ENCODE measurements at regions of chr17 and their contacts with region 1.

Region 1: DNA sequence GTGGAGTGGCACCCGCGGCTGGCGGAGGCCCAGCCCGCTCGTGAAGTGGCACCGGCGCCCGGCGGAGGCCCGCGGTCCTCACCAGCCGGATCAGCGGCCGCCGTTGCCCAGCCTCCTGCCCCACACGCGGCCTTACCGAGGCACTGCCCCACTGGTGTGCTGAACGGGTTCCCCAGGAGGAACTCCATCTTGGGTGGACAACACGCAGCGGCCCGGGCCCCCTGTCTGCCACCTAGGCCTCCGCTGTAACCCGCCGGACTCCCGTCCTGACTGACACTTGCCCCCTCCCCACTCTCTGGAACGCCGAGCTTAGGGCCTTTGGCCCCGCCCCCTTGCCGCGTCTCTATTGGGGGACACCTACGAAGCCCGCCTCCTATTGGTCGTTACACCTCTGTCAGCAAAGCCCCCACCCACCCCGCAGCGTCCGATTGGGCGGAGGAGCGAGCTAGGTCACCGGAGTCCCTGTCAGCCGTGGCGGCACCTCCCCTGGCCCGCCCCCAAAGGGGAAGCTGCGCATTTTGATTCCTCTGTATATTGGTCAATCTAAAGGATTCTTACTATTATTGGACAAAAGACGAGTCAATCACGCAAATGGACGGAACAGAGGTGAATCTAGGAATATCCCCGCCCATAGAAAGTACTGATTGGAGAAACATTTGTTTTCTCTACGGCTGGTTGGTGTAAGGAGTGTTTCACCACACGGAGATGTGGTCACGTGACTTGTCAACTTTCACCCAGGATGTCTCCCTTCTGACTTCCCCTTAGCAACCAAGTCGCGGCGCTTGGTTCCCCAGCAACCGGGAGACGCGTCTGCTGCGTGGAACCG is at the starts of genes DRC3 and TOM1L2:
- DNase-seq: peak; percentile 99 to 100 (median 100)
- ATAC-seq: peak; percentile 87
- H3K4me3 ChIP-seq: peak within 1 kb of the TSS; percentile 70
- H3K4me3 Mint-ChIP-seq: peak within 1 kb of the TSS; percentile 95
- H3K27ac ChIP-seq: peak within 1 kb of the TSS; percentile 76 to 79
- H3K27ac Mint-ChIP-seq: peak within 1 kb of the TSS; percentile 90
- H3K4me1 ChIP-seq: peaks cover 23% of the 10 kb centered on the region
- H3K4me1 Mint-ChIP-seq: peaks cover 49% of the 10 kb centered on the region
- H3K27me3 ChIP-seq: no peaks in the 10 kb centered on the region
- H3K27me3 Mint-ChIP-seq: no peaks in the 10 kb centered on the region
- CTCF ChIP-seq: no peak
- total RNA-seq, gene DRC3: 0.11 TPM in 1 of 2 experiments, not detected in the other
- total RNA-seq, gene TOM1L2: 28.5 to 30.5 TPM

Region 2: GRCh38 chr17:17752089-17752820 is 220.1 kb before region 1 on chr17:
- CTCF ChIA-PET with region 1: no interaction called
- POLR2A ChIA-PET with region 1: interaction called, 5 read pairs
- intact Hi-C with region 1: loop called in 1 of 2 experiments (anchors 5 kb)
- DNase-seq: peak; percentile 94 to 98 (median 97)
- ATAC-seq: peak; percentile 82
- H3K4me3 ChIP-seq: peak overlapping the region; percentile 87
- H3K4me3 Mint-ChIP-seq: peak overlapping the region; percentile 67
- H3K27ac ChIP-seq: peak overlapping the region; percentile 89 to 90
- H3K27ac Mint-ChIP-seq: peak overlapping the region; percentile 95
- H3K4me1 ChIP-seq: peaks cover 83% of the 10 kb centered on the region
- H3K4me1 Mint-ChIP-seq: peaks cover 81% of the 10 kb centered on the region
- H3K27me3 ChIP-seq: no peaks in the 10 kb centered on the region
- H3K27me3 Mint-ChIP-seq: no peaks in the 10 kb centered on the region
- CTCF ChIP-seq: peak; percentile 58

Region 3: GRCh38 chr17:17919169-17920107 is 52.9 kb before region 1 on chr17:
- CTCF ChIA-PET with region 1: interaction called, 4 read pairs
- POLR2A ChIA-PET with region 1: interaction called, 7 read pairs
- intact Hi-C with region 1: loop called in 1 of 2 experiments (anchors 5 kb)
- DNase-seq: peak; percentile 44 to 81 (median 64)
- ATAC-seq: peak; percentile 99
- H3K4me3 ChIP-seq: no peak overlapping the region
- H3K4me3 Mint-ChIP-seq: no peak overlapping the region
- H3K27ac ChIP-seq: no peak overlapping the region
- H3K27ac Mint-ChIP-seq: no peak overlapping the region
- H3K4me1 ChIP-seq: peaks cover 9% of the 10 kb centered on the region
- H3K4me1 Mint-ChIP-seq: peaks cover 19% of the 10 kb centered on the region
- H3K27me3 ChIP-seq: no peaks in the 10 kb centered on the region
- H3K27me3 Mint-ChIP-seq: no peaks in the 10 kb centered on the region
- CTCF ChIP-seq: peak; percentile 59

Region 4: DNA sequence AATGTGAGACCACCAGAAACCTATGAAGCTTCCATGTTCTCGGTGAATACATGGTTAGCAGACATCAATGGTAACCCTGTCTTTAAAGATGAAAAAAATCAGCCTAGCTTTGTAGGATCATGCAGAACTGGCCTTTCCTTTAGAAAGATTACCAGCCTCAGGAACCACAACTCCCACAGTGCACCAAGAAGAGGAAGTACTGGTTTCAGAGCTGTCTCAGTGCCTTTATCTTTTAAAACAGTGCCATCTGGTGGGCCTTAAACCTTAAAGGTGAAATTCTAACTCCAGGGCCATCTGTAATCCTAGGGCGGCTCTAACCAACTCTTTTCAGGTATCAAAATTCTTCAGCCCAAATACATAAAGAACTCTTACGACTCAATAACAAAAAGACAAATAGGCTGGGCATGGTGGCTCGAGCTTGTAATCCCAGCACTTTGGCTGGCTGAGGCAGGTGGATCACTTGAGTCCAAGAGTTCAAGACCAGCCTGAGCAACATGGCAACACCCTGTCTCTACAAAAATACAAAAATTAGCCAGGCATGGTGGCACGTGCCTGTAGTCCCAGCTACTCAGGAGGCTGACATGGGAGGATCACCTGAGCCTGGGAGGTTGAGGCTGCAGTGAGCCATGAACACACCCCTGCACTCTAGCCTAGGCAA is 61.2 kb after region 1 on chr17:
- CTCF ChIA-PET with region 1: interaction called, 11 read pairs
- POLR2A ChIA-PET with region 1: interaction called, 10 read pairs
- intact Hi-C with region 1: loop called in 1 of 2 experiments (anchors 2 kb)
- DNase-seq: peak in 11 of 14 experiments; percentile 11 to 87 (median 46)
- ATAC-seq: peak; percentile 98
- H3K4me3 ChIP-seq: no peak overlapping the region
- H3K4me3 Mint-ChIP-seq: peak overlapping the region; percentile 77
- H3K27ac ChIP-seq: no peak overlapping the region
- H3K27ac Mint-ChIP-seq: peak overlapping the region; percentile 60
- H3K4me1 ChIP-seq: peaks cover 28% of the 10 kb centered on the region
- H3K4me1 Mint-ChIP-seq: peaks cover 30% of the 10 kb centered on the region
- H3K27me3 ChIP-seq: no peaks in the 10 kb centered on the region
- H3K27me3 Mint-ChIP-seq: no peaks in the 10 kb centered on the region
- CTCF ChIP-seq: peak; percentile 69

Region 5: DNA sequence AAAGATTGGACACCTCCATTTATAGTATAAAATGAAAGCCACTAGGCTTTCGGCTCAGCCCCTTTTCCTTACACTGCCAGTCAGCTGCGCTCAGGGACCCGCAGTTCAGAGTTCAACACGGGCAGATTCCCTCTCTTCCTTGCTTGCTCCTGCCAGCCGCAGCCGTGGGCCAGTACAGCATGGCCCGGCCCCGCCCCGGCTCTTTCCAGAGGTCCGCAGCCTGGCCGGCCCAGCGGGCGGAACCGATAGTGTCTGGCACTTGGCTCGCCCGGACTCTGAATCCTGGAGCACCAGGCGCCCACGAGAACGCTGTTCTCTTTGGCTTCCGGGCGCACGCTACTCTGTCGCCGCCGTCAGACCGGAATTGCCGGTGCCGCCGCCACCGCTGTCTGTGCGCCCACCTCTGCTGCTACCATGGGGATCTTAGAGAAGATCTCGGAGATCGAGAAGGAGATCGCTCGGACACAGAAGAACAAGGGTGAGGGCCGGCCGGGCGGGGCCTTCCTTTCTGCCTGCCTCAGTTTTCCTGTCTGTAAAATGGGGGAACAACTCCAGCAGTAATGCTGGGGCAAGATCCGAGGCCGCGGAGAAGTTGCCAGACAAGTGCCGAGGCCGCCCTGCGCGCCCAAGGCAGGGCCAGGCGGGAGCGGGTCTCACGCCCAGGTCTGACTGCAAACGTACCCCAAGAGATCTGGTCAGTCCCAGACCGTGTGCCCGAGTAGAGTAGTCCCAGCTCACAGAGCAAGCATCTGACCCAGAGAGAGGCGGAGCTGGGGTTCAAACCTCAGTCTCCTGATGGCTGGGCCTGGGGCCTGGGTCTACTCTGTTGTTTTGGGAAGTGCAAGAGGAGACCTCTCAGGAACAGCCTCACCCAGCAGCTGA is 115.5 kb after region 1 on chr17 and contains the start of gene DRG2:
- CTCF ChIA-PET with region 1: no interaction called
- POLR2A ChIA-PET with region 1: no interaction called
- intact Hi-C with region 1: loop called in 1 of 2 experiments (anchors 5 kb)
- DNase-seq: peak; percentile 79 to 94 (median 84)
- ATAC-seq: peak; percentile 92
- H3K4me3 ChIP-seq: peak within 1 kb of the TSS; percentile 79
- H3K4me3 Mint-ChIP-seq: peak within 1 kb of the TSS; percentile 100
- H3K27ac ChIP-seq: peak within 1 kb of the TSS; percentile 80
- H3K27ac Mint-ChIP-seq: peak within 1 kb of the TSS; percentile 97
- H3K4me1 ChIP-seq: peaks cover 27% of the 10 kb centered on the region
- H3K4me1 Mint-ChIP-seq: peaks cover 32% of the 10 kb centered on the region
- H3K27me3 ChIP-seq: no peaks in the 10 kb centered on the region
- H3K27me3 Mint-ChIP-seq: no peaks in the 10 kb centered on the region
- CTCF ChIP-seq: no peak
- total RNA-seq, gene DRG2: 38.9 to 40.6 TPM

Measured in CD4-positive, alpha-beta T cell (primary cell).